Kidney (tissue), 22 donors: ENCODE measurements at regions of chr17 and their contacts with region 1.

Region 1: DNA sequence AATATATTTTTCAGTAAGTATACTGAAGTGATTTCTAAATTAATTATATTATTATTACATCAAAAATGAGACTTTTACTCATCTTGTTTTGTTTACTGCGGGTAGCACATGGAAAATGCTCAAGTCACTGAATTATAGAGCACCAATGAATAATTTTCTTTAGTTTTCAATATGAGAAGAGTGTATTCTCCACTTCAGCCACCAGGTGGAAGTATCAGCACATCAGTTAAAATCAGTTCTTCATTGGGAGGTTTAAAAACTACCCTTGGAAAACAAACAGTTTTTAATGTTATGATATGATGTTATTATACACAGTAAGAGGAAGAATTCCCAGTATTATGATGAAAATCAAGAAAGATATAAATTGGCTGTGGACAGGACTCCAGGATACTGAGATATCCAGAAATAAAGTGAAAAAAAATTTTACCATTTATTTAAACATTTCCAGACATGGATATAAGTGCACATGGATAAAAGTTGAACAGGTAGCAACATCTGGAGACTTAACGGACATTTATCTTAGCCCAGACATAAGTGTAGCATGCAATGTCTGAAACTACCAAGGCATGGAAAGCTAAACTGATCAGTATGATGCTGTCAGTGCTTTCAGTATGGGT is 467.3 kb downstream of the KCNJ2 start:
- DNase-seq: peak in 2 of 5 donors; percentile 58 to 80
- H3K4me3 ChIP-seq: no peak overlapping the region
- H3K27ac ChIP-seq: no peak overlapping the region
- H3K4me1 ChIP-seq: no peaks in the 10 kb centered on the region
- H3K27me3 ChIP-seq: no peaks in the 10 kb centered on the region
- CTCF ChIP-seq: peak; percentile 74

Region 2: GRCh38 chr17:72539981-72540897 is 1903.6 kb after region 1 on chr17:
- intact Hi-C with region 1: loop called (anchors 10 kb)
- DNase-seq: peak; percentile 85 to 89 (median 89)
- H3K4me3 ChIP-seq: peak overlapping the region in 1 of 3 donors; percentile 18
- H3K27ac ChIP-seq: no peak overlapping the region
- H3K4me1 ChIP-seq: peaks cover 0 to 3% (median 2%) of the 10 kb centered on the region in 3 donors
- H3K27me3 ChIP-seq: no peaks in the 10 kb centered on the region
- CTCF ChIP-seq: peak; percentile 95